T-cell (primary cell): ENCODE measurements at regions of chr12 and their contacts with region 1.

Region 1: DNA sequence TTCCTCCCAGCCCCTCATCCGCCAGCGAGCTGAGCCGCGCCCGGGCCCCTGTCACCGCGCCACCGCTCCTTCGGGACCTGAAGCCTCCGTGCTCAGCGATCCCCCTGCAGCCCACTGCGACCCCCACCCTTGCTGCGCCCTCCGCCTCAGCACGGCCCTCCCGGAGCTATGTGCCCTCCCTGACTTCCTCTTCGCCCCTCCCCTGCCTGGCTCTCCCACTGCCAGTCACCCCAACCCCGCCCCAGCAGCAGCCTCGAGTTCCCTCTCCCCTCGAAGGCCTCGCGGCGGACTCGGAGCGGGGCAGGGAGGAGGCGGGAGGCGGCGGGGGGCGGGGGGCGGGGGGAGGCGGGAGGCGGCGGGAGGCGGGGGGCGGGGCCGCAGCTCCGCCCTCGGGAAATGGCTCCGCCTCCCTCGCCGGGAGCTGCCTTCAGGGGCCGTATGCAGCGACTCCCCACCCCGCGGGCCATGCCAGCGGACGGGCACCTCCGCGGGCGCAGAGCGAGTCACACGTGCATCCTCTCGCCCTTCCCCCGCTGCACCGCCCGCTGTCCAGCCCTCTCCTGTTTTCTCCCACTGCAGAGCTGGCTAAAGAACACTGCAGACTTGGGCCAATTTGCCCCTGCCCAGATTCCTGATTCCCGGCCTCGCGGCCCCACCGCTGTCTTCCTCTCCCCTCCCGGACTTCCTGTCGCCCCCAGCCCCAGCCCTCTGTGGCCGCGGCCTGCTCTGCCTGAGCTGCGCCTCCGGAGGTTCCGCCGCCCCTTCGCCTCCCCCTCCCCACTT is 29.1 kb upstream of the ADIPOR2 start:
- DNase-seq: peak; percentile 47 to 92 (median 78)
- ATAC-seq: peak; percentile 80 to 86 (median 83)
- H3K4me3 ChIP-seq: peak overlapping the region; percentile 47 to 59
- H3K4me3 Mint-ChIP-seq: peak overlapping the region; percentile 75 to 78 (median 77)
- H3K27ac ChIP-seq: peak overlapping the region; percentile 41
- H3K27ac Mint-ChIP-seq: peak overlapping the region; percentile 87 to 90
- H3K4me1 ChIP-seq: peaks cover 12 to 26% of the 10 kb centered on the region in 2 experiments
- H3K4me1 Mint-ChIP-seq: peaks cover 31 to 40% (median 38%) of the 10 kb centered on the region in 3 donors
- H3K27me3 ChIP-seq: no peaks in the 10 kb centered on the region
- H3K27me3 Mint-ChIP-seq: no peaks in the 10 kb centered on the region

Region 2: DNA sequence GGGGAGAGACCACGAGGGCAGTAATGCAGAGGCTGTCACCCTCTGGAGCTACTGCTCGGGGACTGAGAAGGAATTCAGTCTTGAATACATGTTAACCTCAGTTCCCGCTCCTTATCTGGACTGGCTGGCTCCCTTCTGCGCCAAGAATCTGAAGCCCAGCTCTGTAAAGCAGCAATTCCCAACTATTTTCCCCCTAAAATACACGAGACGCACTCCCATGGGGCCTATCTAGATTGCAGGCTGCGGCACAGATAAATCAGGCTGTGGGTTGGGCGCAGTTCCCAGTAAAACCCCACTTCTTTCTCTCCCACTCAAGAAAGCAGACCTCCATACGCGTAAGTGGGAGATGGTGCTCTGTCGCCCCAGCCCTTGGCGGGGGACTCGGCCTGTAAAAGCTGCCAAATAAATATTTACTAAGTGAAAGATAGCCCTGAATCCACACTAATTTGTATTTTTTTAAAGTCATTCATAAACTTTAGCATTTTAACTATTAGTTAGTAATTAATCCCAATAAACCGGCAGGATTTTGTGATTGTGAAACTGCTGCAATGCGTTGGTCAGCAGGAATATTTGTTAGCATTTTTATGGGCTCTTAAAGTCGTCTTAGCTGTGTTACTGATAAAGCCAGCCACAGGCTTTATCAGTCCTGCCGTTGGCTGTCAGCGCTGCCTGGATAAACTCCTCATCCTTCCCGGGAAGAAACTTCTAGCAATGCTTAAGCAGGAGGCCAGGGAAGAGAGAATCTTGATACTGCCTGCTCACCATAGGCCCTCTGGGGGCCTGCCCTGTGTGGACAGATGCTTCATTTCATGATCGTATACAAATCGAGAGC is 85.1 kb before region 1 on chr12:
- CTCF ChIA-PET with region 1: no interaction called
- POLR2A ChIA-PET with region 1: no interaction called
- DNase-seq: no peak
- ATAC-seq: no peak
- H3K4me3 ChIP-seq: no peak overlapping the region
- H3K4me3 Mint-ChIP-seq: no peak overlapping the region
- H3K27ac ChIP-seq: no peak overlapping the region
- H3K27ac Mint-ChIP-seq: no peak overlapping the region
- H3K4me1 ChIP-seq: no peaks in the 10 kb centered on the region
- H3K4me1 Mint-ChIP-seq: peaks cover 0 to 8% (median 2%) of the 10 kb centered on the region in 3 donors
- H3K27me3 ChIP-seq: no peaks in the 10 kb centered on the region
- H3K27me3 Mint-ChIP-seq: peaks cover 0 to 7% of the 10 kb centered on the region in 2 donors

Region 3: DNA sequence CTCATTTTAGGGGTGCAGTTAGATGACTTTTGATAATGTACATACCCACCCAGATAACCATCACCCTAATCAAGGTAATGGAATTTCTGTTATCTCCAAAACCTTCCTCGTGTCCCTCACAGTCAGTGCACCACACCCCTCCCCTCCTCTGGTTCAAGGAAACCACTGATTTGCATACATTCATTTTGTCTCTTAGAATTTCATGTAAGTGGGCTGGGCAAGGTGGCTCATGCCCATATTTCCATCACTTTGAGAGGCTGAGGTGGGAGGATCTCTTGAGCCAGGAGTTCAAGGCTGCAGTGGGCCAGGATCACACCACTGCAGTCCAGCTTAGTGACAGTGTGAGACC is 44.9 kb after region 1 on chr12:
- CTCF ChIA-PET with region 1: interaction called in 1 of 2 experiments, 5 read pairs
- POLR2A ChIA-PET with region 1: interaction called in 1 of 2 experiments, 12 read pairs
- DNase-seq: no peak
- ATAC-seq: no peak
- H3K4me3 ChIP-seq: no peak overlapping the region
- H3K4me3 Mint-ChIP-seq: peak overlapping the region in 1 of 3 donors; percentile 9
- H3K27ac ChIP-seq: no peak overlapping the region
- H3K27ac Mint-ChIP-seq: no peak overlapping the region
- H3K4me1 ChIP-seq: peaks cover 2 to 8% of the 10 kb centered on the region in 2 experiments
- H3K4me1 Mint-ChIP-seq: peaks cover 65 to 85% (median 71%) of the 10 kb centered on the region in 3 donors
- H3K27me3 ChIP-seq: no peaks in the 10 kb centered on the region
- H3K27me3 Mint-ChIP-seq: no peaks in the 10 kb centered on the region